Thyroid gland (tissue), 4 donors: ENCODE measurements at regions of chr9 and their contacts with region 1.

Region 1: GRCh38 chr9:70427161-70427945 is 12.9 kb upstream of the KLF9 start:
- DNase-seq: no peak
- H3K4me3 ChIP-seq: no peak overlapping the region
- H3K27ac ChIP-seq: no peak overlapping the region
- H3K4me1 ChIP-seq: peaks cover 0 to 4% of the 10 kb centered on the region in 2 donors
- H3K27me3 ChIP-seq: no peaks in the 10 kb centered on the region
- CTCF ChIP-seq: no peak
- POLR2A ChIP-seq: no peak

Region 2: DNA sequence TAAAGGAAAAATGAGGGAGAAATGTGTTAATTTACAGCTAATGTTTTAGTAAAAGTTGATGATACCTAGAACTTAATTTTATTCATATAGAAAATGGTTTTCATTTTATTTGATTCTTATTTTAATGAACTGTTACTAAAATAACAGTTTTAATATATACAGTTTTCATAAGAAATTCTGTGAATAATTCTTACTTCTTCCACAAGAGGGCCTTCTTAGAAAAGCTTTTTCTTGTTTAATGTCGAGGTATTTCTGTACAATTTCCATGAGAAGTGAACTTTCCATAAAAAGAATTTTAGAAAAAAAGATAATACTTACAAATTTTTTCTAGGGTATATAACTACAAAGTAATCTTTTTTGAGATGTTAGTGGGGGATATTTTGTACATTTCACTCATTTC is 86.8 kb before region 1 on chr9:
- intact Hi-C with region 1: no loop called
- DNase-seq: no peak
- H3K4me3 ChIP-seq: no peak overlapping the region
- H3K27ac ChIP-seq: no peak overlapping the region
- H3K4me1 ChIP-seq: no peaks in the 10 kb centered on the region
- H3K27me3 ChIP-seq: no peaks in the 10 kb centered on the region
- CTCF ChIP-seq: peak in 5 of 6 experiments; percentile 48 to 80 (median 54)
- POLR2A ChIP-seq: no peak

Region 3: GRCh38 chr9:70470050-70471015 is 43.0 kb after region 1 on chr9:
- intact Hi-C with region 1: loop called (anchors 5 kb)
- DNase-seq: peak; percentile 28 to 33
- H3K4me3 ChIP-seq: no peak overlapping the region
- H3K27ac ChIP-seq: peak overlapping the region; percentile 36 to 66 (median 47)
- H3K4me1 ChIP-seq: peaks cover 8 to 37% of the 10 kb centered on the region in 2 donors
- H3K27me3 ChIP-seq: no peaks in the 10 kb centered on the region
- CTCF ChIP-seq: no peak
- POLR2A ChIP-seq: no peak